Naive thymus-derived CD4-positive, alpha-beta T cell (primary cell): ENCODE measurements at regions of chr1 and their contacts with region 1.

Region 1: DNA sequence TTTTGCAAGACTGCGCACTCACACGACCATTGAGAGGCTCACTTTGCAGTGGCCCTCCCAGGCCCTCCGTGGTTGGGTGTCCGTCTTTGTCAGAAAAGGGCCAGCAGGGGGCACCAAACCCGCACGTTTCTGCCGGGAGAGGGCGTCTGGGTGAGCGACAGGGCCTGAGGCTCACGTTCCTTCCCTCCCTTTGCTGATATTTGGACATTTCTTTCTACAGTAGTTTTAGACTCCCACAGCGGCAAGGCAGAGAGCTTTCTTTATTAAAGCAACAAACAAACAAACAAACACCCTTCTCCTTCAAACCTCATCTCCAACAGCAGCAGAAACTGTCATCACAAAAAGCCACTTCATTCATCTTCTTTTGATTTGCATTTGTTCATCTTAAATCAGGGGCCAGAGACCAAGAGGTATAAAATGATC is 79.2 kb upstream of the WDR26 start:
- DNase-seq: peak; percentile 43 to 85 (median 72)
- ATAC-seq: peak; percentile 91
- H3K4me3 ChIP-seq: no peak overlapping the region
- H3K4me3 Mint-ChIP-seq: no peak overlapping the region
- H3K27ac ChIP-seq: no peak overlapping the region
- H3K27ac Mint-ChIP-seq: peak overlapping the region in 2 of 9 donors; percentile 1 to 14
- H3K4me1 ChIP-seq: no peaks in the 10 kb centered on the region
- H3K4me1 Mint-ChIP-seq: peaks cover 0 to 26% (median 7%) of the 10 kb centered on the region in 7 donors
- H3K27me3 ChIP-seq: no peaks in the 10 kb centered on the region
- H3K27me3 Mint-ChIP-seq: peaks cover 0 to 4% (median 0%) of the 10 kb centered on the region in 5 donors

Region 2: GRCh38 chr1:224524679-224525078 is 10.9 kb after region 1 on chr1:
- CTCF ChIA-PET with region 1: interaction called, 10 read pairs
- POLR2A ChIA-PET with region 1: no interaction called
- intact Hi-C with region 1: no loop called
- DNase-seq: no peak
- ATAC-seq: no peak
- H3K4me3 ChIP-seq: no peak overlapping the region
- H3K4me3 Mint-ChIP-seq: no peak overlapping the region
- H3K27ac ChIP-seq: no peak overlapping the region
- H3K27ac Mint-ChIP-seq: no peak overlapping the region
- H3K4me1 ChIP-seq: no peaks in the 10 kb centered on the region
- H3K4me1 Mint-ChIP-seq: peaks cover 0 to 4% (median 0%) of the 10 kb centered on the region in 7 donors
- H3K27me3 ChIP-seq: no peaks in the 10 kb centered on the region
- H3K27me3 Mint-ChIP-seq: peaks cover 0 to 24% (median 0%) of the 10 kb centered on the region in 5 donors

Region 3: DNA sequence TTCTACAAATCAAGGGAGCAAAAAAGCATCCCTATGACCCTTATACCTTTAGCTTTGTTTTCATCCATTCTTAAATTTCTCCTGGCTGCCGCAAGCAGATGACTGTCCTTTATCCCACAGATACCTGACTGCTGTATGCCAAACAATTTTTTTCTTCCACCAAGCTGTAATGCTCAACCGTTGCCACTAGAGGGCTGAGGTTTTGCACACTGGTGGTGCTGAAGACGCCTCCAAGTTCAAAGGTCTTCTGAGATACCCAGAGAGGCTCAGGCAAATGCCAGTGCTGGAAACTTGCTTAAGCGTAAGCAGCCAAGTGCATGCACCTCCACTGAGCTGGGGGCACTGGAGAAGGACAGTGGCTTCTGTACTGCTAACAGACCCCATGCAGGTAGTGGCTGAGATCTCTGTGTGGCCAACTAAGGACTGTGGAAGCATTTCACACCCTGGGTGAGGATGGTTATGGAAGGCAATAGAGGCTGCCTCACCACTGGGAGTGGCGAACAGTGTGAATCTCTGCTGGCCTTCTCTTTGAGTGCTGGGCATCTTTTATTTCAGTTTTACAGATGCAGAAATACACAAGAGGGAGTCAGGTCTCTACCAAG is 130.9 kb after region 1 on chr1:
- CTCF ChIA-PET with region 1: no interaction called
- POLR2A ChIA-PET with region 1: no interaction called
- intact Hi-C with region 1: loop called (anchors 1 to 2 kb)
- DNase-seq: peak; percentile 16 to 65 (median 53)
- ATAC-seq: peak; percentile 78
- H3K4me3 ChIP-seq: no peak overlapping the region
- H3K4me3 Mint-ChIP-seq: no peak overlapping the region
- H3K27ac ChIP-seq: no peak overlapping the region
- H3K27ac Mint-ChIP-seq: no peak overlapping the region
- H3K4me1 ChIP-seq: no peaks in the 10 kb centered on the region
- H3K4me1 Mint-ChIP-seq: peaks cover 0 to 8% (median 0%) of the 10 kb centered on the region in 7 donors
- H3K27me3 ChIP-seq: no peaks in the 10 kb centered on the region
- H3K27me3 Mint-ChIP-seq: peaks cover 0 to 14% (median 6%) of the 10 kb centered on the region in 5 donors

Region 4: GRCh38 chr1:224922404-224923164 is 408.8 kb after region 1 on chr1:
- CTCF ChIA-PET with region 1: interaction called, 16 read pairs
- POLR2A ChIA-PET with region 1: no interaction called
- intact Hi-C with region 1: no loop called
- DNase-seq: peak in 2 of 9 donors; percentile 13 to 25
- ATAC-seq: peak; percentile 52
- H3K4me3 ChIP-seq: no peak overlapping the region
- H3K4me3 Mint-ChIP-seq: no peak overlapping the region
- H3K27ac ChIP-seq: no peak overlapping the region
- H3K27ac Mint-ChIP-seq: no peak overlapping the region
- H3K4me1 ChIP-seq: no peaks in the 10 kb centered on the region
- H3K4me1 Mint-ChIP-seq: peaks cover 0 to 2% (median 0%) of the 10 kb centered on the region in 7 donors
- H3K27me3 ChIP-seq: no peaks in the 10 kb centered on the region
- H3K27me3 Mint-ChIP-seq: peaks cover 4 to 23% (median 17%) of the 10 kb centered on the region in 5 donors